ENCODE measurements at regions of chr15 and their contacts with region 1.

Region 1: GRCh38 chr15:79184465-79184892 is 93.9 kb upstream of the RASGRF1 start:
- DNase-seq: peak; percentile 80
- ATAC-seq: peak; percentile 75
- H3K4me3 Mint-ChIP-seq: no peak overlapping the region
- H3K27ac Mint-ChIP-seq: no peak overlapping the region
- H3K4me1 Mint-ChIP-seq: peaks cover 4% of the 10 kb centered on the region
- H3K27me3 Mint-ChIP-seq: peaks cover 12% of the 10 kb centered on the region
- CTCF ChIP-seq: peak; percentile 90

Region 2: GRCh38 chr15:78979456-78980320 is 204.8 kb before region 1 on chr15:
- CTCF ChIA-PET with region 1: interaction called, 11 read pairs
- POLR2A ChIA-PET with region 1: no interaction called
- DNase-seq: peak; percentile 71
- ATAC-seq: peak; percentile 90
- H3K4me3 Mint-ChIP-seq: no peak overlapping the region
- H3K27ac Mint-ChIP-seq: no peak overlapping the region
- H3K4me1 Mint-ChIP-seq: peaks cover 11% of the 10 kb centered on the region
- H3K27me3 Mint-ChIP-seq: peaks cover 16% of the 10 kb centered on the region
- CTCF ChIP-seq: peak; percentile 78

Region 3: GRCh38 chr15:79049416-79049815 is 135.1 kb before region 1 on chr15:
- CTCF ChIA-PET with region 1: interaction called, 20 read pairs
- POLR2A ChIA-PET with region 1: no interaction called
- DNase-seq: no peak
- ATAC-seq: no peak
- H3K4me3 Mint-ChIP-seq: no peak overlapping the region
- H3K27ac Mint-ChIP-seq: no peak overlapping the region
- H3K4me1 Mint-ChIP-seq: no peaks in the 10 kb centered on the region
- H3K27me3 Mint-ChIP-seq: peaks cover 32% of the 10 kb centered on the region
- CTCF ChIP-seq: no peak

Region 4: DNA sequence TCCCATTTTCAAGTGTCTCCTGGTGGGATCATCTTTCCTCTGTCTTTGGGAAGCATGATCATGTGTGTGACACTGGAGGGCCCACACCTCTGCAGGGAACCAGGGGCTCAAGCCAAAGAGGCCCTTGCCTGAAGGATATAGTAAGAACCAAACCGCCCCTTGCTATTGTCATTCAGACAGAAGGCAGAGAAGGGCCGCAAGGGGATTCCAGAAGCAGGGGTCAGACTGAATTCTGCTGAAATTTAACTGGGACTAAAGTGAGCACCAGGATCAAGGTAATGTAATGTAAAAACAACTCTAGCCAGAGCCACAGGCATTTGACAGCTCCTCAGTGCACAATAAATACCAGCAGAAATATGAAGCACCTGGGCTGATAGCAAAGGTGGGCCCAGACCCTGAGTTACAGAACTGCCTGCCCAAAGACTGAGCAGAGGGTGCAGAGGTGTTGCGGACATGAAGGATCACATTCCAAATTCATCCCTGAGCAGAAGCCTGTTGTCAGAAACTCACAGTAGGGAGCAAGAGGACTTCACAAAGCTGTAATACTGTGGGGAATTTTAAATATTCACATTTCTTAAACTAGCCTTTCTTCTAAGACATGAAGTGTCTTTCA is 47.9 kb before region 1 on chr15:
- CTCF ChIA-PET with region 1: interaction called, 19 read pairs
- POLR2A ChIA-PET with region 1: no interaction called
- DNase-seq: peak; percentile 32
- ATAC-seq: peak; percentile 97
- H3K4me3 Mint-ChIP-seq: peak overlapping the region; percentile 13
- H3K27ac Mint-ChIP-seq: peak overlapping the region; percentile 84
- H3K4me1 Mint-ChIP-seq: peaks cover 27% of the 10 kb centered on the region
- H3K27me3 Mint-ChIP-seq: peaks cover 9% of the 10 kb centered on the region
- CTCF ChIP-seq: no peak

Region 5: GRCh38 chr15:79209690-79210089 is 25.2 kb after region 1 on chr15:
- CTCF ChIA-PET with region 1: interaction called, 55 read pairs
- POLR2A ChIA-PET with region 1: no interaction called
- DNase-seq: peak; percentile 67
- ATAC-seq: peak; percentile 73
- H3K4me3 Mint-ChIP-seq: peak overlapping the region; percentile 59
- H3K27ac Mint-ChIP-seq: no peak overlapping the region
- H3K4me1 Mint-ChIP-seq: peaks cover 37% of the 10 kb centered on the region
- H3K27me3 Mint-ChIP-seq: no peaks in the 10 kb centered on the region
- CTCF ChIP-seq: peak; percentile 64

Region 6: DNA sequence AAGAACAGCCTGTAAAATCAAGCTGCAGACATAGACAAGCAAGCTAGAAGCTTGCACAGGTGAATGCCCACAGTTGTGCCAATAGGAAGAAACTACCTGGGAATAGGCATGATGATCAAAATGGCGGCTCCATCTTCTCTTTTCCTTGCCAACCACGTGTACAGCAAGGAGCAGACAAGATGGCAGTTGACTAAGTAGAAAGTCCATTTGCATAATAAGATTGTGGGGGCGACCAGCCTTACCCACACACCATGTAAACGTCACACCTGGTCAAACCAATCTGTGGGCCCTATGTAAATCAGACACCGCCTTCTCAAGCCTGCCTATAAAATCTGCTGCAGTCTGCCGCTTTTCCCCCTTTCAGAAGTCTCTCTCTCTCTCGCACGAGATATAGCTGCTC is 73.0 kb after region 1 on chr15:
- CTCF ChIA-PET with region 1: no interaction called
- POLR2A ChIA-PET with region 1: no interaction called
- DNase-seq: no peak
- ATAC-seq: no peak
- H3K4me3 Mint-ChIP-seq: no peak overlapping the region
- H3K27ac Mint-ChIP-seq: no peak overlapping the region
- H3K4me1 Mint-ChIP-seq: no peaks in the 10 kb centered on the region
- H3K27me3 Mint-ChIP-seq: no peaks in the 10 kb centered on the region
- CTCF ChIP-seq: no peak

Region 7: GRCh38 chr15:79408041-79408440 is 223.6 kb after region 1 on chr15:
- CTCF ChIA-PET with region 1: no interaction called
- POLR2A ChIA-PET with region 1: no interaction called
- DNase-seq: no peak
- ATAC-seq: no peak
- H3K4me3 Mint-ChIP-seq: no peak overlapping the region
- H3K27ac Mint-ChIP-seq: no peak overlapping the region
- H3K4me1 Mint-ChIP-seq: peaks cover 27% of the 10 kb centered on the region
- H3K27me3 Mint-ChIP-seq: no peaks in the 10 kb centered on the region
- CTCF ChIP-seq: no peak